ENCODE measurements at regions of chr22 and their contacts with region 1.

Region 1: GRCh38 chr22:41697126-41697775 is 2.1 kb upstream of the MEI1 start:
- DNase-seq: peak; percentile 27
- H3K4me3 ChIP-seq: no peak overlapping the region
- H3K27me3 ChIP-seq: no peaks in the 10 kb centered on the region
- CTCF ChIP-seq: peak; percentile 97

Region 2: DNA sequence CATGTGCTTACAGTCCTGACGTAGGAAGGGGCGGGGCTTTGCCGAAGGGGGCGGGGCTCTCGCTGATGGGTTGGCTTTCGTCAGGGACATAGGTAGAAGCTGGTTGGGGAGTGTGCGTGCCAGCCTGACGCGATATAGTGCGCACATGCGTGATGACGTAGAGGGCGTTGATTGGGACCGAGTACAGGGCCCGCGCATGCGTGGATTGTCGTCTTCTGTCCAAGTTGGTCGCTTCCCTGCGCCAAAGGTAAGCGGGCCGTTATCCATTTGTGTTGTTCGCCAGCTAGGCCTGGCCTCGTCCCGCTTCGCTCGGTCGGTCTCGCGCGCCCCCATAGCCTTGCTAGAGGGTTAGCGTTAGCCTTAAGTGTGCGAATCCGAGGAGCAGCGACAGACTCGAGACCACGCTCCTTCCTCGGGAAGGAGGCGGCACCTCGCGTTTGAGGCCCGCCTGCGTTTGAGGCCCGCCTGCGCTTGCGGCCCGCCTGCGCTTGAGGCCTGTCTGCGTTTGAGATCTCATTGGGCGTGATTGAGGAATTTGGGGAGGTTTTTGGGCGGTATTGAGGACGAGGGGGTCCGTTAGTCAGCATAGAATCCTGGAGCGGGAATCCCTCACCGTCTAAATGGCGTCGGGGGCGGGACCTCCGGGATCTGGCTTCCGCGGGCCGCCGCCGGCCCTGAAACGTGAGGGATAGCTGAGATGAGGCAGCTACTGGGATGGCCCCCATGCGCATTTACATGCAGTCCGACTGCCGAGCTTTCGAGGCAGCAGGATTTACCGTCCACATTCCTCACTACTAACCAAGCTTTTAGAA is 75.9 kb before region 1 on chr22 and contains the start of gene XRCC6:
- CTCF ChIA-PET with region 1: no interaction called
- POLR2A ChIA-PET with region 1: no interaction called
- DNase-seq: peak; percentile 98
- H3K4me3 ChIP-seq: peak within 1 kb of the TSS; percentile 93
- H3K27me3 ChIP-seq: no peaks in the 10 kb centered on the region
- CTCF ChIP-seq: no peak
- polyA plus RNA-seq, gene XRCC6: 105 and 137 TPM in 2 replicates

Region 3: DNA sequence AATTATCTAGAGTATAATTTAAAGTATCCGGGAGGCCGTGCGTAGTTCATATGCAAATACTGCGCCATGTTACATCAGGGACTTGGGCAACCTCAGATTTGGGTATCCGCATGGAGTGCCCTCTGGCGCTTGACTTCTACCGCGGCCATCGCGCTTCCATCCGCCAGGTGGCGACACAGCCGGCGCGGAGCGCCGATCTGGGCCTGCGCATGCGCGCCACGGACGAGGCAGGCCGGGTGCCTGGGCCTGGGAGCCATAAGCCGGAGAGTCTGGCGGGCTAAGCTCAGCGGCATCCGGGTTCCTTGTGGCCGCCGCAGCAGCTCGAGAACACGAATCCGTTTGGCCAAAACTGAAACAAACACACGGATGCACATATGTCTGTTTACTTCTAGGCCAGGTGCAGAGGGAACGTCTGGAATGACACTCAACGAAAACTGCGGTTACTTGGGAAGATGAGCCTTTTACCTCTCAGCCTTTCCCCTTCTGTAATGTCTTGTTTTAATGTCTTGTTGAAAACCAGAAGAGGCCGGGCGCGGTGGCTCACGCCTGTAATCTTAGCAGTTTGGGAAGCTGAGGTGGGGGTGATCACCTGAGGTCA is 30.5 kb before region 1 on chr22:
- CTCF ChIA-PET with region 1: interaction called, 27 read pairs
- POLR2A ChIA-PET with region 1: no interaction called
- DNase-seq: peak; percentile 47
- H3K4me3 ChIP-seq: peak overlapping the region; percentile 9
- H3K27me3 ChIP-seq: no peaks in the 10 kb centered on the region
- CTCF ChIP-seq: peak; percentile 99

Region 4: GRCh38 chr22:41725510-41726110 is 28.4 kb after region 1 on chr22:
- CTCF ChIA-PET with region 1: interaction called, 29 read pairs
- POLR2A ChIA-PET with region 1: no interaction called
- DNase-seq: no peak
- H3K4me3 ChIP-seq: no peak overlapping the region
- H3K27me3 ChIP-seq: peaks cover 1% of the 10 kb centered on the region; the same call in 1 of the 2 replicates
- CTCF ChIP-seq: no peak

Region 5: GRCh38 chr22:41746567-41747400 is 49.5 kb after region 1 on chr22:
- CTCF ChIA-PET with region 1: interaction called, 20 read pairs
- POLR2A ChIA-PET with region 1: no interaction called
- DNase-seq: peak; percentile 38
- H3K4me3 ChIP-seq: no peak overlapping the region
- H3K27me3 ChIP-seq: peaks cover 16% of the 10 kb centered on the region
- CTCF ChIP-seq: peak; percentile 90

Region 6: DNA sequence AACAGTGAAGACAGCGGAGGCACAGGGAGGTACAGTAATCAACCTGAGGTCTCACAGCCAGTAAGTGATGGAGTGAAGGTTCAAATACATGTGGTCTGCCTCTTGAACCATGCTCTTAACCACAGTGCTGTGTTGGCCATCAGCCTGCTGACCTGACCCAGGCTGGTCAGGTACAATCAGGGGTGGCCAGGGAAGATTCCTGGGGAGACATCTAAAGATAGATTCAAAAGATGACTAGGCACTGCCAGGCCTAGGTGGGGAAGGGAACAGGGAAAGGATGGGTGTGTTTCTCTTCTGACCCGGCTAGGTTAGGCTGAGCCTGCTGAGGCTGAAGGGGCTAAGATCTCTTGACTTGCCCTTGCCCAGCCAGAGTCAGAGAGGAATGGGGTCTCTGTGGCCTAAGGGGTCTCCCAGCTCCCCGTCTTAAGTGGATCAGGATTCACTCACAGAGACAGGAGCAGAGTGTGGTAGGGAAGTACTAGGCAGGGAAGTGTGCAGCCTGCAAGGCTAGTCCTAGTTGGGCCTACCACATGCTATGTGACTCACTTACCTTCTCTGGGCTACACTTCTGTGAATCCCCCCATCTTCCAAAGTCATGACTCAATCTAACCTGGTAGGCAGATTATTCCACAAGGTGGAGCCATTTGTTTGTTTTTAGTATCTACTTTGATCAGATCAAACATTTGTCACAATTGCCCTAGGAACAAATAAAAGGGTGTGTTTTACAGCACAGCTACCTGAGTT is 125.2 kb after region 1 on chr22:
- CTCF ChIA-PET with region 1: interaction called, 11 read pairs
- POLR2A ChIA-PET with region 1: no interaction called
- DNase-seq: no peak
- H3K4me3 ChIP-seq: no peak overlapping the region
- H3K27me3 ChIP-seq: no peaks in the 10 kb centered on the region
- CTCF ChIP-seq: peak; percentile 28

Region 7: GRCh38 chr22:41940832-41941765 is 243.8 kb after region 1 on chr22:
- CTCF ChIA-PET with region 1: interaction called, 119 read pairs
- POLR2A ChIA-PET with region 1: interaction called, 4 read pairs
- DNase-seq: no peak
- H3K4me3 ChIP-seq: no peak overlapping the region
- H3K27me3 ChIP-seq: no peaks in the 10 kb centered on the region
- CTCF ChIP-seq: peak; percentile 92

Region 8: GRCh38 chr22:41957941-41958556 is 260.8 kb after region 1 on chr22:
- CTCF ChIA-PET with region 1: interaction called, 19 read pairs
- POLR2A ChIA-PET with region 1: no interaction called
- DNase-seq: no peak
- H3K4me3 ChIP-seq: no peak overlapping the region
- H3K27me3 ChIP-seq: no peaks in the 10 kb centered on the region
- CTCF ChIP-seq: no peak